GM12878 (cell line): ENCODE measurements at regions of chr20 and their contacts with region 1.

Region 1: GRCh38 chr20:8399947-8400346 is 267.9 kb downstream of the PLCB1 start:
- DNase-seq: peak; percentile 92
- ATAC-seq: peak; percentile 94
- H3K4me3 ChIP-seq: peak overlapping the region; percentile 15; the same call in 1 of the 2 replicates
- H3K27ac ChIP-seq: peak overlapping the region; percentile 52; the same call in 1 of the 2 replicates
- H3K4me1 ChIP-seq: peaks cover 10% of the 10 kb centered on the region; the same call in 1 of the 2 replicates
- H3K27me3 ChIP-seq: no peaks in the 10 kb centered on the region
- CTCF ChIP-seq: peak in 1 of 3 experiments; percentile 9; a peak in 1 of 6 replicates
- EP300 ChIP-seq: peak; percentile 90 to 97
- POLR2A ChIP-seq: no peak
- RAD21 ChIP-seq: no peak

Region 2: GRCh38 chr20:8352486-8352885 is 47.5 kb before region 1 on chr20:
- CTCF ChIA-PET with region 1: no interaction called
- POLR2A ChIA-PET with region 1: no interaction called
- RAD21 ChIA-PET with region 1: no interaction called
- SMC1A ChIA-PET with region 1: no interaction called
- in situ Hi-C with region 1: no loop called
- intact Hi-C with region 1: no loop called
- DNase-seq: no peak
- ATAC-seq: no peak
- H3K4me3 ChIP-seq: no peak overlapping the region
- H3K27ac ChIP-seq: no peak overlapping the region
- H3K4me1 ChIP-seq: no peaks in the 10 kb centered on the region
- H3K27me3 ChIP-seq: no peaks in the 10 kb centered on the region
- CTCF ChIP-seq: no peak
- EP300 ChIP-seq: no peak
- POLR2A ChIP-seq: no peak
- RAD21 ChIP-seq: no peak

Region 3: GRCh38 chr20:8414586-8415274 is 14.8 kb after region 1 on chr20:
- CTCF ChIA-PET with region 1: interaction called, 11 read pairs
- POLR2A ChIA-PET with region 1: interaction called, 3 read pairs
- RAD21 ChIA-PET with region 1: interaction called, 8 read pairs
- SMC1A ChIA-PET with region 1: interaction called, 68 read pairs
- in situ Hi-C with region 1: no loop called
- intact Hi-C with region 1: no loop called
- DNase-seq: peak; percentile 61
- ATAC-seq: peak; percentile 88
- H3K4me3 ChIP-seq: no peak overlapping the region
- H3K27ac ChIP-seq: no peak overlapping the region
- H3K4me1 ChIP-seq: no peaks in the 10 kb centered on the region
- H3K27me3 ChIP-seq: no peaks in the 10 kb centered on the region
- CTCF ChIP-seq: no peak
- EP300 ChIP-seq: peak; percentile 27 to 43; a peak in 1 of 4 replicates
- POLR2A ChIP-seq: no peak
- RAD21 ChIP-seq: no peak

Region 4: DNA sequence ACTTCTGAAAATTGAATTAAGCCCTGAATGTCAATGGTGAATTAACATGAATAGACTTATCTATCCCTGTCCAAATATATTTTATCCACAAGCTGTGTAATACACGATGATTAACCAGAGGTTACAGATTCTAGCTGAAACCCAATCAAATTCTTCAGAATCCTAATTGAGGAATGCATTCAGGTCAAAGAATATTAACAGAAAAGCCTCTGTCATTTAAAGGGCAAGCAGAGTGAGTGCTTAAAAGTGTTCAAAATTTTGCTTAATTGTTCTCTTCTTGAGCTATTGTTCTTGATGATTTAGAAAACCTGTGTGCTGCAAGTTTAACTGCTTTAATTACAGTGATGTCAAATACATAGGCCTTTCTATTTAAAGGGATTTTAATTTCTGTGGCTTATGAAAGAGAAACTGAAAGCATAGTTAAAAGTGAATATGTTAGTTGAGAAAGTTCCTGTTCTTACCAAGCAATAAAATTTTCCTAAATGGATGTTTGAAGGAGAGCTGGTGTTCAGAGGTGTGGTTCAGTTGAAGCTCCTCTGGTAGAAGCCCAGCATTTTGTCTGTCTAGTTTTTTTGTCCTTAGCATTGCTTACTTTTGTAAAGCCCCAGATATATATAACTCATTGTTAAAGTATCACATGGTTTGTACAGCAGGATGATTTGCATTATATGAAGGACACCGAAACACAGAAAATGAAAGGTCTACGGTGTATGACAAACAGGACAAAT is 202.6 kb after region 1 on chr20:
- CTCF ChIA-PET with region 1: no interaction called
- POLR2A ChIA-PET with region 1: no interaction called
- RAD21 ChIA-PET with region 1: no interaction called
- SMC1A ChIA-PET with region 1: interaction called, 6 read pairs
- in situ Hi-C with region 1: no loop called
- intact Hi-C with region 1: loop called (anchors 5 kb)
- DNase-seq: peak; percentile 69
- ATAC-seq: peak; percentile 92
- H3K4me3 ChIP-seq: 0 out of 2 replicates have a peak overlapping the region, but pooled peaks have one; percentile 4
- H3K27ac ChIP-seq: peak overlapping the region; percentile 64
- H3K4me1 ChIP-seq: peaks cover 15% of the 10 kb centered on the region
- H3K27me3 ChIP-seq: no peaks in the 10 kb centered on the region
- CTCF ChIP-seq: no peak
- EP300 ChIP-seq: no peak
- POLR2A ChIP-seq: no peak
- RAD21 ChIP-seq: no peak

Region 5: DNA sequence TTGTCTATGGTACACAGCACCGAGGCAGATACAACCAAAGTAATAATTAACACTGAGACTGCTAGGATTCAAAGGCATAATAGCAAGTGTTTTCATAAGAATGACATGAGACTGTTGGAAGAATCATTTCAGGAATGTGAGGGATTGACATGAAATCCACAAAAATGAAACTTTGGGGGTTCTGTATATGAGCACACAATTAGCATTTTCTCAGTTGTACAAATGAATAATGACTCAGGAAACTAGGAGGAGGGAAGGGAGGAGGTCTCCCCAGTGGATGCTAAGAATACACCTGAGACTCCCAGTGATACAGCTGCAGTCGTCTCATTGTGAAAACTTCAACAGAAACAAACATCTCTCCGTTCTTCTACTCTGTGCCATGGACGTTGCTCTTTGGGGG is 240.5 kb after region 1 on chr20:
- CTCF ChIA-PET with region 1: no interaction called
- POLR2A ChIA-PET with region 1: no interaction called
- RAD21 ChIA-PET with region 1: no interaction called
- SMC1A ChIA-PET with region 1: no interaction called
- in situ Hi-C with region 1: no loop called
- intact Hi-C with region 1: no loop called
- DNase-seq: no peak
- ATAC-seq: no peak
- H3K4me3 ChIP-seq: no peak overlapping the region
- H3K27ac ChIP-seq: no peak overlapping the region
- H3K4me1 ChIP-seq: no peaks in the 10 kb centered on the region
- H3K27me3 ChIP-seq: no peaks in the 10 kb centered on the region
- CTCF ChIP-seq: no peak
- EP300 ChIP-seq: no peak
- POLR2A ChIP-seq: no peak
- RAD21 ChIP-seq: no peak